ENCODE measurements at regions of chr4 and their contacts with region 1.

Region 1: DNA sequence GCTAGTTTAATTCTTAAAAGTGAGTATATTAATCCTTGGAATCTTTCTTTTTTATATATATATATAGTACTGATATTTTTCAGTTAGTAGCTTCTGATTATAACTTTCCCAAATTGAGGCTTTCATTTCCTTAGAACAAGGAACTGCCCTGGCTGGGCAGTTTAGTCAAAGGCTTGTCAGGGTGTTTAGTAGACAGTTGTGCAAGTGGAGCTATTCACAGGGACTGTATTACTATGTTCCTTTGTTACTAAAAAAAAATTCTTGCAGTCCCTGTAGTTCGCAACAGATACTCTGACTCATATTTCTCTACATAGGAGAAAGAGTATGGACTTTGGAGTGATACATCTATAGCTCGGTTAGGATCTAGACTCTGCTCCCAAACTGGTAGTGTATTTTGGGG is 20.8 kb downstream of the USO1 start:
- DNase-seq: peak; percentile 28 to 67 (median 61)
- H3K4me3 ChIP-seq: peak overlapping the region in 1 of 7 experiments; percentile 23
- H3K27ac ChIP-seq: peak overlapping the region; percentile 7 to 62
- H3K4me1 ChIP-seq: peaks cover 6 to 21% (median 16%) of the 10 kb centered on the region in 4 experiments
- H3K27me3 ChIP-seq: no peaks in the 10 kb centered on the region

Region 2: DNA sequence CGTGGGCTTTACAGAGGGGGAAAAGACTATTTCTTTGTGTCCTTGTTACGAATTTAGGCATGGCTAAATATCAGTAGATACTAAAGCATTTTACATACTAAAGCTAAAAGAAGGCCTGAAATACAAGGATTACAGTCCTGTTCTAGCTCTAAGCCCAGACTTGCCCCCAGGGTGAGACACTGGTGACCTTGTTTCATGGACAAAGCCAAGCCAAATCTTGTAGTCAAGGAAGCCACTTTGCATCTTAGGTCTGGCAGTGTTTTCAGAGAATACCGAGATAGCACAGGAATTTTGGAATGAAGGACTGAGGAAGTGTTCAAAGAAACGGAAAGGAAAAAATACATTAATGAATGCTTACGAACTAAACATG is 71.2 kb before region 1 on chr4:
- CTCF ChIA-PET with region 1: no interaction called
- POLR2A ChIA-PET with region 1: no interaction called
- DNase-seq: no peak
- H3K4me3 ChIP-seq: peak overlapping the region in 6 of 7 experiments; percentile 95 to 100 (median 98)
- H3K27ac ChIP-seq: peak overlapping the region; percentile 94 to 98
- H3K4me1 ChIP-seq: peaks cover 22 to 31% (median 29%) of the 10 kb centered on the region in 4 experiments
- H3K27me3 ChIP-seq: no peaks in the 10 kb centered on the region

Region 3: GRCh38 chr4:75769036-75769435 is 23.9 kb after region 1 on chr4:
- CTCF ChIA-PET with region 1: interaction called, 14 read pairs
- POLR2A ChIA-PET with region 1: no interaction called
- DNase-seq: no peak
- H3K4me3 ChIP-seq: no peak overlapping the region
- H3K27ac ChIP-seq: no peak overlapping the region
- H3K4me1 ChIP-seq: no peaks in the 10 kb centered on the region
- H3K27me3 ChIP-seq: no peaks in the 10 kb centered on the region